A549 (cell line): ENCODE measurements at regions of chr11 and their contacts with region 1.

Region 1: GRCh38 chr11:727859-728748 is 19.2 kb upstream of the TALDO1 start:
- DNase-seq: peak; percentile 93 to 94
- ATAC-seq: peak; percentile 85 to 90
- H3K4me3 ChIP-seq: no peak overlapping the region
- H3K27ac ChIP-seq: peak overlapping the region; percentile 79 to 93
- H3K4me1 ChIP-seq: peaks cover 47% of the 10 kb centered on the region
- CTCF ChIP-seq: peak; percentile 99
- EP300 ChIP-seq: no peak
- POLR2A ChIP-seq: peak; percentile 10; the same call in 1 of the 2 replicates
- RAD21 ChIP-seq: peak; percentile 73 to 86

Region 2: GRCh38 chr11:342328-342727 is 385.8 kb before region 1 on chr11:
- CTCF ChIA-PET with region 1: no interaction called
- POLR2A ChIA-PET with region 1: no interaction called
- DNase-seq: no peak
- ATAC-seq: no peak
- H3K4me3 ChIP-seq: no peak overlapping the region
- H3K27ac ChIP-seq: no peak overlapping the region
- H3K4me1 ChIP-seq: no peaks in the 10 kb centered on the region
- CTCF ChIP-seq: no peak
- EP300 ChIP-seq: no peak
- POLR2A ChIP-seq: no peak
- RAD21 ChIP-seq: no peak

Region 3: DNA sequence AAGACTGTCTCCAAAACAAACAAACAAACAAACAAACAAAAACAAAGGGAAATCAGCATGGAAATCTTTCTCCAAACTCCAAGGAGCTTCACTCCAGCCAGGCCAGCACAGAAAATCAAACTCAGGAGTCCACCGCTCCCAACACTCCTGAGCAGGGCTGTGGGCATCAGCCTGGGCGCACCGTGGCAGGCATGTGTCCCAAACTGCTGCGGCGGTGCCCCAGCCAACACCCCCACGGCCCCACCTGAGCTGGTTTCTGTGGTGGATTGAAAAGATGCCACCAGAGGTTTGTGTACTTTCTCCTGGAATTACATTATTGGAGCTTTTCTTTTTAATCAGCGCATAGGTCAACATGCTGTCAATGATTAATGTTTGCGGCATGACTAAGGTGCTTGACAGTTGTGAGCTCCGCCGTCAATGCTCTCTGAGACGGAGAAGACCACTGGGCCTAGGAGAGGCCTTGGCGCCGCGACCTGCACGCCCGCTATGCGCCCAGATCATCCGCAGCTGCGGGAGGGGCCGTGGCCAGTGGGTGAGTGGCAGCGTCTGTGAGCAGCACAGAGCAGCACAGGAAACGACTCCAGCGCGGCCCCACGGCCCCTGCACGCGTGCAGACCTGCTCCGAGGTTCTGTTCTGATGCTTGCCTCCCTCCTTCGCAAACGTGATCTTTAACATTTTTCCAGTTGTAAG is 72.9 kb before region 1 on chr11:
- CTCF ChIA-PET with region 1: interaction called, 39 read pairs
- POLR2A ChIA-PET with region 1: no interaction called
- DNase-seq: peak in 1 of 2 experiments; percentile 36
- ATAC-seq: peak; percentile 25 to 60; a peak in 4 of 6 replicates
- H3K4me3 ChIP-seq: no peak overlapping the region
- H3K27ac ChIP-seq: no peak overlapping the region
- H3K4me1 ChIP-seq: peaks cover 14% of the 10 kb centered on the region
- CTCF ChIP-seq: no peak
- EP300 ChIP-seq: no peak
- POLR2A ChIP-seq: no peak
- RAD21 ChIP-seq: no peak

Region 4: GRCh38 chr11:674406-674805 is 53.7 kb before region 1 on chr11:
- CTCF ChIA-PET with region 1: interaction called, 30 read pairs
- POLR2A ChIA-PET with region 1: no interaction called
- DNase-seq: no peak
- ATAC-seq: no peak
- H3K4me3 ChIP-seq: no peak overlapping the region
- H3K27ac ChIP-seq: no peak overlapping the region
- H3K4me1 ChIP-seq: no peaks in the 10 kb centered on the region
- CTCF ChIP-seq: no peak
- EP300 ChIP-seq: no peak
- POLR2A ChIP-seq: no peak
- RAD21 ChIP-seq: no peak

Region 5: GRCh38 chr11:695538-696248 is 32.4 kb before region 1 on chr11 and contains the start of gene TMEM80:
- CTCF ChIA-PET with region 1: interaction called, 599 read pairs
- POLR2A ChIA-PET with region 1: interaction called, 14 read pairs
- DNase-seq: peak; percentile 54 to 98
- ATAC-seq: peak; percentile 75 to 89
- H3K4me3 ChIP-seq: peak within 1 kb of the TSS; percentile 81
- H3K27ac ChIP-seq: peak within 1 kb of the TSS; percentile 95 to 98
- H3K4me1 ChIP-seq: peaks cover 42% of the 10 kb centered on the region
- CTCF ChIP-seq: no peak
- EP300 ChIP-seq: no peak
- POLR2A ChIP-seq: peak; percentile 89
- RAD21 ChIP-seq: no peak
- polyA plus RNA-seq, gene TMEM80: 15.1 and 15.2 TPM in 2 replicates

Region 6: GRCh38 chr11:765025-765801 is 37.1 kb after region 1 on chr11:
- CTCF ChIA-PET with region 1: interaction called, 26 read pairs
- POLR2A ChIA-PET with region 1: no interaction called
- DNase-seq: peak; percentile 60 to 82
- ATAC-seq: peak; percentile 63 to 64
- H3K4me3 ChIP-seq: no peak overlapping the region
- H3K27ac ChIP-seq: peak overlapping the region in 1 of 2 experiments; percentile 56; a peak in 2 of 6 replicates
- H3K4me1 ChIP-seq: peaks cover 29% of the 10 kb centered on the region
- CTCF ChIP-seq: peak; percentile 64
- EP300 ChIP-seq: no peak
- POLR2A ChIP-seq: no peak
- RAD21 ChIP-seq: peak; percentile 59 to 69

Region 7: DNA sequence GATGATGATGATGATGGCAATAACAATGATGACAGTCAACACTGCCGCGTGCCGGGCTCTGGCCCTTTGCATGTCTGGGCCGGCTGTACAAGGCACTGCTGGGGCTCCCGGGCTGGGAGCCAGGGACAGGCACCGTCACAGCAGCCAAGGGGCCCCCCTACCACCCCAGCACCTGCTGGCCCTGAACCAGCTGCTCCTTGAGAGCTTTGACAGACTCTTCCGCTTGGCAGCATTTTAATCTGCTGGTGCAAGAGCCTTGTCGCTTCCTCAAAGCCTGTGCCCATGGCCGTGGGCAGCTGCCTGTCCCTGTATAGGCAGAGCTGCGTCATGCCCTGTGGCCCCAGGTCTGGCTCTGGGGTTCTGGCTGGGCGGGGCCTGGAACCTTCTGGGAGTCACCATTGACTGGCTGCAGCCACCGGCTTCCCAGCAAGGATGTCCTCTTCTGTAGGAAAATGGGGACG is 321.4 kb after region 1 on chr11:
- CTCF ChIA-PET with region 1: no interaction called
- POLR2A ChIA-PET with region 1: no interaction called
- DNase-seq: no peak
- ATAC-seq: no peak
- H3K4me3 ChIP-seq: no peak overlapping the region
- H3K27ac ChIP-seq: no peak overlapping the region
- H3K4me1 ChIP-seq: peaks cover 37% of the 10 kb centered on the region
- CTCF ChIP-seq: no peak
- EP300 ChIP-seq: no peak
- POLR2A ChIP-seq: no peak
- RAD21 ChIP-seq: no peak